Transverse colon (tissue), 4 donors: ENCODE measurements at regions of chr7 and their contacts with region 1.

Region 1: GRCh38 chr7:36312344-36313334 is 77.0 kb upstream of the ANLN start:
- DNase-seq: peak; percentile 72
- H3K4me3 ChIP-seq: peak overlapping the region in 1 of 4 donors; percentile 1
- H3K27ac ChIP-seq: peak overlapping the region in 1 of 4 donors; percentile 23
- H3K4me1 ChIP-seq: peaks cover 0 to 8% (median 3%) of the 10 kb centered on the region in 4 donors
- H3K27me3 ChIP-seq: no peaks in the 10 kb centered on the region
- CTCF ChIP-seq: peak; percentile 26 to 74 (median 58)
- EP300 ChIP-seq: no peak
- POLR2A ChIP-seq: no peak

Region 2: GRCh38 chr7:35993676-35994606 is 318.7 kb before region 1 on chr7:
- in situ Hi-C with region 1: loop called in 3 of 4 experiments (anchors 10 kb)
- intact Hi-C with region 1: no loop called
- DNase-seq: peak; percentile 26
- H3K4me3 ChIP-seq: no peak overlapping the region
- H3K27ac ChIP-seq: no peak overlapping the region
- H3K4me1 ChIP-seq: no peaks in the 10 kb centered on the region
- H3K27me3 ChIP-seq: no peaks in the 10 kb centered on the region
- CTCF ChIP-seq: no peak
- EP300 ChIP-seq: no peak
- POLR2A ChIP-seq: no peak

Region 3: DNA sequence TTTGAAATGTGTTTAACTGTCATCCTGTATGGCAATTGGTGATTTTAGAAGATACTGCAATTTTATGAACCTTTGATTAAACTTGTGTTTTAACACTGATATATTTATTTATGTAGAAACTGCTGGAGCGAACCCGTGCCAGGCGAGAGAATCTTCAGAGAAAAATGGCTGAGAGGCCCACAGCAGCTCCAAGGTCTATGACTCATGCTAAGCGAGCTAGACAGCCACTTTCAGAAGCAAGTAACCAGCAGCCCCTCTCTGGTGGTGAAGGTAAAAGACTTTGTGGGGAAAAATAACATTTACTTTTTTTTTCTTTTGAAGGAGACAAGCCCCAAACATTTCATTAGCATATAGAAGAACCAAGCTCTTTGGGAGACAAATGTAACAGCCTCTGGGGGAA is 83.5 kb after region 1 on chr7:
- in situ Hi-C with region 1: no loop called
- intact Hi-C with region 1: no loop called
- DNase-seq: no peak
- H3K4me3 ChIP-seq: no peak overlapping the region
- H3K27ac ChIP-seq: no peak overlapping the region
- H3K4me1 ChIP-seq: peaks cover 0 to 11% (median 5%) of the 10 kb centered on the region in 4 donors
- H3K27me3 ChIP-seq: no peaks in the 10 kb centered on the region
- CTCF ChIP-seq: no peak
- EP300 ChIP-seq: no peak
- POLR2A ChIP-seq: no peak